ENCODE measurements at regions of chr17 and their contacts with region 1.

Region 1: GRCh38 chr17:4498461-4499397 is at the start of gene SPNS2:
- DNase-seq: peak; percentile 70 to 81 (median 78)
- H3K4me3 ChIP-seq: peak within 1 kb of the TSS; percentile 50 to 89 (median 75)
- H3K27ac ChIP-seq: peak within 1 kb of the TSS; percentile 75 to 78
- H3K4me1 ChIP-seq: peaks cover 4 to 56% (median 48%) of the 10 kb centered on the region in 4 experiments
- H3K27me3 ChIP-seq: no peaks in the 10 kb centered on the region

Region 2: GRCh38 chr17:4433515-4434031 is 65.2 kb before region 1 on chr17 and contains the start of gene SPNS3:
- CTCF ChIA-PET with region 1: interaction called, 7 read pairs
- POLR2A ChIA-PET with region 1: interaction called, 12 read pairs
- DNase-seq: peak; percentile 85 to 98 (median 96)
- H3K4me3 ChIP-seq: peak within 1 kb of the TSS in 5 of 7 experiments; percentile 4 to 64 (median 31)
- H3K27ac ChIP-seq: peak within 1 kb of the TSS; percentile 72 to 74
- H3K4me1 ChIP-seq: peaks cover 4 to 66% (median 57%) of the 10 kb centered on the region in 4 experiments
- H3K27me3 ChIP-seq: no peaks in the 10 kb centered on the region

Region 3: DNA sequence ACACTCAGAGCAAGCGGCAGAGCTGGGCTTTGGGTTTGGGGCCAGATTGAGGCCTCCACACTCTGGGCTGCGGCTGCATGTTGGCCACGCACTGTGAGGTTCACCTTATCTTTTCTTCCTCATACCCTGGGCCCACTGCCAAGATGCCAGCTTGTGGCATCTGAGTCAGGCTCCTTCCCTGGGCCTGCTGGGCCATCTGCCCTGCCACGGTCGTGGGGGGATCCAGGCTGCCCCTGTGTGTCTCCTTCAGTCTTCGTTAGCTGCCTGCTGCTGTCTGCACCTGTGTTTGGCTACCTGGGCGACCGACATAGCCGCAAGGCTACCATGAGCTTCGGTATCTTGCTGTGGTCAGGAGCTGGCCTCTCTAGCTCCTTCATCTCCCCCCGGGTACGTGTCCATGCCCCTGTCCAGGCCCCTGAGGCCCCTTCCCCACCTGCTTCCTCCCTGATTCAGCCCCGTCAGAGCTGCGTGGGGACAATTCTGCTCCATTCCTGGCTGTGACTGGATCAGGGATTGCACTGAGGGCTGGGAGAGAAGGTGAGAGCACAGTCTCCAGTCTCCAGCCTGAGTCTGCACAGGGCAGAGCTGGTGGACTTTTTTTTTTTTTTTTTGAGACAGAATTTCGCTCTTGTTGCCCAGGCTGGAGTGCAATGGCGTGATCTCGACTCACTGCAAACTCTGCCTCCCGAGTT is 53.8 kb before region 1 on chr17:
- CTCF ChIA-PET with region 1: interaction called, 16 read pairs
- POLR2A ChIA-PET with region 1: interaction called, 6 read pairs
- DNase-seq: peak; percentile 95 to 99 (median 98)
- H3K4me3 ChIP-seq: peak overlapping the region in 3 of 7 experiments; percentile 11 to 48 (median 19)
- H3K27ac ChIP-seq: no peak overlapping the region
- H3K4me1 ChIP-seq: peaks cover 0 to 64% (median 36%) of the 10 kb centered on the region in 4 experiments
- H3K27me3 ChIP-seq: no peaks in the 10 kb centered on the region

Region 4: GRCh38 chr17:4480929-4481898 is 17.5 kb before region 1 on chr17:
- CTCF ChIA-PET with region 1: interaction called, 24 read pairs
- POLR2A ChIA-PET with region 1: interaction called, 5 read pairs
- DNase-seq: peak; percentile 33 to 74 (median 56)
- H3K4me3 ChIP-seq: peak overlapping the region in 5 of 7 experiments; percentile 22 to 59 (median 43)
- H3K27ac ChIP-seq: peak overlapping the region; percentile 8 to 40
- H3K4me1 ChIP-seq: peaks cover 0 to 68% (median 59%) of the 10 kb centered on the region in 4 experiments
- H3K27me3 ChIP-seq: no peaks in the 10 kb centered on the region

Region 5: GRCh38 chr17:4509401-4509800 is 10.7 kb after region 1 on chr17:
- CTCF ChIA-PET with region 1: interaction called, 16 read pairs
- POLR2A ChIA-PET with region 1: interaction called, 9 read pairs
- DNase-seq: peak in 2 of 3 donors; percentile 60 to 67
- H3K4me3 ChIP-seq: peak overlapping the region in 5 of 7 experiments; percentile 2 to 43 (median 41)
- H3K27ac ChIP-seq: no peak overlapping the region
- H3K4me1 ChIP-seq: peaks cover 7 to 80% (median 76%) of the 10 kb centered on the region in 4 experiments
- H3K27me3 ChIP-seq: no peaks in the 10 kb centered on the region

Region 6: DNA sequence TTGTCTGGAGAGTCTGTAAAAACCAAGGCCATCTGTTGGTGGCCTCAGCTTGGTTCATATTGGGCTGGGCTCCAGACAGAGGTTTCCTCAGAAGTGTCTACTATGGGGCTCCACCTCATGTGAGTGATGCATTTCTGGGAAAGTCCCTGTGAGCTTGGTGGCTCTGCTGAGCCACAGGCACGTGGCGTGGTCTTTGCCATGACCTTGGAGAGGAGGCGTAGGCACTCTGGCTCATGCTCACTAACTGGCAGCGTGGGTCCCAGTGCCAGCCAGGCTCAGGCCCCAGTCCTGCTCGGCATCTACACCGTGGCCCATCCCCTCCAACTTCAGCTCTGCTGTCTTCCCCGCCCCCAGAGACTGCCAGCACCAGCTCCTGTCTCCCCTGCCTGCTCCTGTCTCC is 74.9 kb after region 1 on chr17:
- CTCF ChIA-PET with region 1: no interaction called
- POLR2A ChIA-PET with region 1: no interaction called
- DNase-seq: peak in 2 of 3 donors; percentile 82 to 84
- H3K4me3 ChIP-seq: no peak overlapping the region
- H3K27ac ChIP-seq: no peak overlapping the region
- H3K4me1 ChIP-seq: peaks cover 0 to 10% (median 1%) of the 10 kb centered on the region in 4 experiments
- H3K27me3 ChIP-seq: no peaks in the 10 kb centered on the region

Measured in common myeloid progenitor, CD34-positive (primary cell).